PC-3 (cell line): ENCODE measurements at regions of chr16 and their contacts with region 1.

Region 1: DNA sequence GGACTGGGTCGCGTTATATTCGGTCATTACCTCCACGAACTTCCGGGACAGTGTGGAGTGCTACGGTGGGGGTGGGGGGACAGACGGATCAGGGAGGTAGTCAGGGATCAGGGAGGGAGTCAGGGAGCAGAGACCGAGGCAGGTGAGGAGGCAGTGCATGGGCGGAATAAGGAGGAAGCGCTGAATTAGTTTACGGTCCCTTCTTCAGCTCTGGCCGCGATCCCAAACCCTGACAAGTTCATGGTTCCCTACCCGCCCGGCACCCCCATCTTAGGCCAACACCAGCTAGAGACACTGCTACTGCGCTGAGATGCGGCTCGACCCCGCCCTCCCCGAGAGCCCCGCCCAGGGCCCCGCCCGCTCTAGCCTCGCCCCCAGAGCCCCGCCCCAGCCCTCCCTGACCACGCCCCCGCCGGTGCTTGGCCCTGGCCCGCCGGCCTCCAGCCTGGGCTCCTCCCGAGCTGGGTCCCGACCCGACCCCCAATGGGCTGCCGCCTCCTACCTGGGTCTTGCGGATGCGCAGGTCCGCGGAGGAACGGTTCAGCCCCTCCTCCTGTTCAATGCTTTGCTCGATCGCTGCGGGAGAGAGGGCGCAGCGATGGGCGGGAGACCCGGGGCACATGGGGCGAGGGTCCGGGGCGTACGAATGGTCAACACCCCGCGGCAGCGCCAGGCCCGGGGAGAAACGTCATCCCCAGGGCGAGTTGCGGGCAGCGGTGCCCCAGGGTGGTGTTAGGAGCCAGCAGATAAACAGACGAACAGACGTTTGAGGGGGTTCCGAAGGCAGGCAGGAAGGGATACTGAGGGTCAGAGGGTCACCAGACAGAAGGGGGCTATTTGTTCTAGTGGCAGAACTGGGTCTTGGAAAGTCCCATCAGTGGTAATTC is 12.2 kb downstream of the HSD3B7 start:
- DNase-seq: peak; percentile 68
- ATAC-seq: peak; percentile 80
- H3K4me3 ChIP-seq: peak overlapping the region; percentile 83
- H3K27ac ChIP-seq: peak overlapping the region; percentile 86
- H3K4me1 ChIP-seq: peaks cover 31% of the 10 kb centered on the region
- H3K27me3 ChIP-seq: no peaks in the 10 kb centered on the region
- CTCF ChIP-seq: no peak

Region 2: GRCh38 chr16:30867747-30868146 is 129.5 kb before region 1 on chr16:
- CTCF ChIA-PET with region 1: no interaction called
- POLR2A ChIA-PET with region 1: no interaction called
- intact Hi-C with region 1: no loop called
- DNase-seq: peak; percentile 12
- ATAC-seq: no peak
- H3K4me3 ChIP-seq: no peak overlapping the region
- H3K27ac ChIP-seq: no peak overlapping the region
- H3K4me1 ChIP-seq: no peaks in the 10 kb centered on the region
- H3K27me3 ChIP-seq: no peaks in the 10 kb centered on the region
- CTCF ChIP-seq: peak; percentile 27; the same call in 1 of the 2 replicates

Region 3: DNA sequence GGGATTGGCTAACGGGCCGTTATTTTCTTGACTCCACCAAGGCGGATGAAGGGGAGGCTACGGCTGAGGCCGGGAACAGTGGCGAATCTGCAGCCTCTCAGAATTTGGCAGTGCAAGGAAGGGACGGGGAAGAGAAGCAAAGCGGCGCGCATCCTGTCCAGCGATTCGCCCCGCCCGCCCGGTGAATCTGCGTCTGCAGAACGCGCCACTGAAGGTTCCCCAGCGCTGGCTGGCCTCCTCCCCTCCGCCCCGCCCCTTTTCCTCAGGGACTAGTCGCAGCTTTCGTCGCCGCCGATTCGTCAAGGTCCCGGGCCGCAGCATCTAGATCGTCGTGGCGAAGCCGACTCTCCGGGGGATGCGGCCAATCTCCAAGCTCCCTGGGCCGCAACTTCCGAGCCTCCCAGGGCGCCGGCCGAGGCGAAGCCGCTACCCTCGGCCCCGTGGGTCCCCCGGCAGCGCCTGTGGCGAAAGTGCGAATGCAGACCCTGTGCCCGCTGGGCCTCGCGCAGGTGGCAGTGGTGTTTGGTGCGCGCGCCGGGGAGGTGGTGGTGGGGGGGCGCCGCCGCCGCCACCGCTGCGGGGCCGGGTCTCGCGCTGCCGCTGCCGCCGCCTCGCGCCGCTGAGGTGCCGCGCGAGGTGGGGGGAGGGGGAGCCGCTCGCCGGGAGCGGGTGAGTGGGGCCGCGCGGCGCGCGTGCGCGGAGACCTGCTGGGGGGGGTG is 39.6 kb before region 1 on chr16 and contains the start of gene SETD1A:
- CTCF ChIA-PET with region 1: no interaction called
- POLR2A ChIA-PET with region 1: no interaction called
- intact Hi-C with region 1: no loop called
- DNase-seq: peak; percentile 80
- ATAC-seq: peak; percentile 81
- H3K4me3 ChIP-seq: peak within 1 kb of the TSS; percentile 85
- H3K27ac ChIP-seq: peak within 1 kb of the TSS; percentile 82
- H3K4me1 ChIP-seq: peaks cover 6% of the 10 kb centered on the region
- H3K27me3 ChIP-seq: no peaks in the 10 kb centered on the region
- CTCF ChIP-seq: no peak
- total RNA-seq, gene SETD1A: 7.9 and 8.6 TPM in 2 replicates

Region 4: DNA sequence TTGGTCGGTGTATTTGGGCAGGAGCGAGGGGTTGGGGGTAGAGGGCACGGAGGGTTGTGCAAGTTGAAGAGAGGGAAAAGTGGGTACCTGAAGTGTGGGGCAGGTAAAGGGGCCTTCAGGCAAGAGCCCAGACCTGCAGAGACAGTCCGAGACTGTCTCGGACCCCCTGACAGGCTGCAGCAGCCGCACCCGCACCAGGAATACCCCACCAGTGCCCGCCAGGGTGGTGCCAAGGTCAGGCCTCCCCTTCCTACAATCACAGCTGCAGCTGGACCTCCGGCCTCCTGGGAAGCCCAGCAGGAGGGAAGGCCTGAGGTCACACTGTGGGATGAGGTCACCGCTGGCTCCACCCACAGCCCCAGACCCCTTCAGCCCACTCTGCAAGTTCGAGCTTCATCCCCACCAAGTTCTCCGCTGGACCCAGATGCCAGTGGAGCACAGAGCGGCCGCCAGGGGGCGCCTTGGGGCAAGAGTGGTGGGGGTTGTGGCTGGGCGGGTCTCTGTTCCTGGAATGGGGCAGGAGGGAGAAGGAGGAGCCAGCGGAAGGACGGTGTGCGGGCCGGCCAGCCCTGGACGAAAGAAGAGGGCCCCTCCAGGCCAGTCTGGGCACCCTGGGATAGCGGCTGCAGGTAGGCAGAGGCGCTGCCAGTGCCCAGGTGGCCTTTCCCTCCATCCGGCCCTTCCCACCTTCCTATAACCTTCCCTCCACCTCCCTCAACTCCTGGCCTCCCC is 12.4 kb before region 1 on chr16 and contains the start of gene HSD3B7:
- CTCF ChIA-PET with region 1: no interaction called
- POLR2A ChIA-PET with region 1: no interaction called
- intact Hi-C with region 1: no loop called
- DNase-seq: peak; percentile 78
- ATAC-seq: peak; percentile 90
- H3K4me3 ChIP-seq: peak within 1 kb of the TSS; percentile 52; the same call in 1 of the 2 replicates
- H3K27ac ChIP-seq: no peak within 1 kb of the TSS
- H3K4me1 ChIP-seq: peaks cover 7% of the 10 kb centered on the region; the same call in 1 of the 2 replicates
- H3K27me3 ChIP-seq: no peaks in the 10 kb centered on the region
- CTCF ChIP-seq: peak; percentile 74
- total RNA-seq, gene HSD3B7: 12.0 and 16.3 TPM in 2 replicates

Region 5: GRCh38 chr16:31022544-31023251 is 25.5 kb after region 1 on chr16:
- CTCF ChIA-PET with region 1: no interaction called
- POLR2A ChIA-PET with region 1: no interaction called
- intact Hi-C with region 1: no loop called
- DNase-seq: no peak
- ATAC-seq: no peak
- H3K4me3 ChIP-seq: no peak overlapping the region
- H3K27ac ChIP-seq: no peak overlapping the region
- H3K4me1 ChIP-seq: no peaks in the 10 kb centered on the region
- H3K27me3 ChIP-seq: no peaks in the 10 kb centered on the region
- CTCF ChIP-seq: no peak

Region 6: GRCh38 chr16:31032736-31033708 is 35.8 kb after region 1 on chr16 and contains the start of gene STX4:
- CTCF ChIA-PET with region 1: no interaction called
- POLR2A ChIA-PET with region 1: no interaction called
- intact Hi-C with region 1: loop called (anchors 5 kb)
- DNase-seq: peak; percentile 92
- ATAC-seq: peak; percentile 80
- H3K4me3 ChIP-seq: peak within 1 kb of the TSS; percentile 98
- H3K27ac ChIP-seq: peak within 1 kb of the TSS; percentile 42
- H3K4me1 ChIP-seq: peaks cover 11% of the 10 kb centered on the region; the same call in 1 of the 2 replicates
- H3K27me3 ChIP-seq: no peaks in the 10 kb centered on the region
- CTCF ChIP-seq: no peak
- total RNA-seq, gene STX4: 27.4 and 36.1 TPM in 2 replicates

Region 7: GRCh38 chr16:31253642-31254045 is 256.4 kb after region 1 on chr16:
- CTCF ChIA-PET with region 1: interaction called, 13 read pairs
- POLR2A ChIA-PET with region 1: no interaction called
- intact Hi-C with region 1: no loop called
- DNase-seq: no peak
- ATAC-seq: no peak
- H3K4me3 ChIP-seq: no peak overlapping the region
- H3K27ac ChIP-seq: no peak overlapping the region
- H3K4me1 ChIP-seq: no peaks in the 10 kb centered on the region
- H3K27me3 ChIP-seq: 0 out of 2 replicates have a peak, but pooled peaks cover 5% of the 10 kb centered on the region
- CTCF ChIP-seq: no peak